ENCODE measurements at regions of chr14 and their contacts with region 1.

Region 1: DNA sequence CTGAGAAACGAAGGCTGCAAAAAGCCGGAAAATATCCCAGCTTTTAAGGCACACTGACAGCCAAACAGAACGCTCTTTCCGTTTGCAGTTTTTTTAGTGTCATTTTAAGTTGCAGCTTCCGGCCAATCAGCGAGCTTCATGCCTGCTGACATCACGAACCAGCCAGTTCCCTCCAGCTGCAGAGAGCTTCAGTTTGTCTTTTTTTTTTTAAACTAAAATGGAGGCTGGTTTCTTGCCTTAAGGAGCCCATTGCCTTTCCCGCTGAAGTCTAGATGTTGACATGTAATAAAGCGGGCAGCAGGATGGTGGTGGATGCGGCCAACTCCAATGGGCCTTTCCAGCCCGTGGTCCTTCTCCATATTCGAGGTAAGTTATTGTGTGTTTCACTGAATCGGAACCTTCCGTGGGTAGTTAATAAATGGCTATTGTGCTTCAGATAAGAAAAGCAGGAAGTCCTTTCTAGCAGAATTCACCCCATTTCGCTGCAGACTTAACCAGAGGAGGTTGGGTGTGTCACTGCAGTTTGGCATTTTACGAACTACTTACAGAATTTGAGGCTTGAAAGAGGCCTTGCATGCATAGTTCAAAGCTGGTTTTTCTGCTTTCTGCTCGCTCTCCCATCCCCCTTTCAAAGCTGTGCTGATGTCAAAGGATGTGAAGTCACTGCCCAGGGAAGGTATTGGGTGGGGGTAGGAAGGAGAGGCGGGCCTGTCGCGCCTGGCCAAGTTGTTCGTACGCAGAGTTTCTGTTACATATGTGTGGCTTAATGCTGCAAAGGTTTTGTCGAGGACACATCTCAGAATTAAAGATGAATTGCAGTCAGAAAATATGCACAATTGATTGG is 48.4 kb downstream of the PPP2R5C start:
- DNase-seq: peak; percentile 70 to 89 (median 75)
- ATAC-seq: peak; percentile 85
- H3K4me3 ChIP-seq: peak overlapping the region; percentile 52
- H3K27ac ChIP-seq: peak overlapping the region; percentile 99
- H3K4me1 ChIP-seq: peaks cover 13 to 44% of the 10 kb centered on the region in 2 experiments; a peak in 4 of 5 replicates
- H3K27me3 ChIP-seq: no peaks in the 10 kb centered on the region
- CTCF ChIP-seq: no peak
- EP300 ChIP-seq: no peak
- POLR2A ChIP-seq: peak; percentile 75
- RAD21 ChIP-seq: no peak

Region 2: DNA sequence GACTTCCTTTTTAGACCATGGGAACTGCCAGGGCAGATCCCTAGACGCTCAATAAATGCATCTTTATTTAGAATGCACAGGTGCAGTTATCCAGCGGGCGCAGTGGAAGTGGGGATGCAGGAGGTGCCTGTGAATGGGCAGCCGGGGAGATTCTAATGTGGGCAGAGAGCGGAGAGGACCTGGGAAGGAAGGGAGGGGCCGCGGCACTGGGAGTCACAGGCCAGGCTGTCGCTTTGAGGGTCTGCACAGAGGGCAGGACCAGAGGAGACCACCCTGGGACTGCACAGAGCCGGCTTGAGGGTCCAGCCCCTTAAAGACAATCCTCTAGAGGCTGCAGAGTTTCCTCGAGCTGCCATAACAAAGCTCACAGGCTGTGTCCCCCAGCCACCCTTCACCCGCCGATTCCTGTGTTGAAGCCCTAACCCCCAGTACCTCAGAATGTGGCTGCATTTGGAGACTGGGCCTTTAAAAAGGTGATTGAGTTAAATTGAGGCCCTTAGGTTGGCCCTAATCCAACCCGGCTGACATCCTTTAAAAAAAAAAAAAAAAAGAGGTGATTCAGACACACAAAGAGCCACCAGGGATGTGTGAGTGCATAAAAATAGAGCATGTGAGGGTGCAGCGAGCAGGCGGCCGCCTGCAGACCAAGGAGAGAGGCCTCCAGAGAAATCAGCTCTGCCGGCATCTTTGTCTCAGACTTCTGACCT is 92.8 kb before region 1 on chr14:
- CTCF ChIA-PET with region 1: no interaction called
- POLR2A ChIA-PET with region 1: no interaction called
- in situ Hi-C with region 1: no loop called
- intact Hi-C with region 1: loop called (anchors 2 kb)
- DNase-seq: peak in 2 of 4 experiments; percentile 1 to 43
- ATAC-seq: no peak
- H3K4me3 ChIP-seq: no peak overlapping the region
- H3K27ac ChIP-seq: peak overlapping the region; percentile 100; the same call in 2 of the 3 replicates
- H3K4me1 ChIP-seq: peaks cover 30 to 38% of the 10 kb centered on the region in 2 experiments; a peak in 4 of 5 replicates
- H3K27me3 ChIP-seq: no peaks in the 10 kb centered on the region
- CTCF ChIP-seq: no peak
- EP300 ChIP-seq: no peak
- POLR2A ChIP-seq: no peak
- RAD21 ChIP-seq: no peak

Region 3: DNA sequence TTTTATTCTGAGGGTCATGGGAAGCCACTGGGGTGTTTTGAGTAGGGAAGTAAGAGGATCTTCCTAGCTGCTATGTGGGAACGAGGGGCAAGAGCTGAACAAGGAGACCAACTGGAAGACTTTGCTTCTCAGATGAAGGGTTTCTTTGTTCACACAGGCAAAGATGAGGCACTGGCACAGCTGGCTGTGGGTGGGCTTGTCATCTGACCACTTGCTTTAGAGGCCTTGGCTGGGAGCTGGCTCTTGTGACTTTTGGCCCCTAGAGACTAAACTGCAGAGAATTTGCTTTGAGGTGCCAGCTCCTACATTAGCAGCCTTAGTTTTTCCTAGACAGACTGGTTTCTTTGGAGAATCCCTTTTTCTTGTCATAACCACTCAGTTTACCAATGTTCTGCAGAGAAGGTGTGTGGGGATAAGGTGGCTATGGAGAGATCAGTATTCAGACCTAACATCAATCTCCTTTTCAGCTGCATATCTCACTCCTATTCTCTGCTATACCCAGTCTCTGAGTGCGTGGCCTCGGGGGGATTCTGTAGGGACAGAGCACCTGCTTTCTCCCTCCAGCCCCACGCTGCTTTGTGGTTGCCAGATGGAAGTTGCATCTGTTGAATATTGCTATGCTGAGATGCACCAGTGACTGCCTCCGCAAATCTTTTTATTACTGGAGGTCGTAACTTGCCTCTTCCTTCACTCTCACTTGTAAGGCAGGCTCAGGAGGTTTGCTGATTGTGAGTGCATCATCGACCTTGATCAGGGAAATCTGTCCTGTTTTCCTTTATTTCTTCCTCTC is 35.7 kb before region 1 on chr14:
- CTCF ChIA-PET with region 1: no interaction called
- POLR2A ChIA-PET with region 1: no interaction called
- in situ Hi-C with region 1: no loop called
- intact Hi-C with region 1: loop called (anchors 5 kb)
- DNase-seq: no peak
- ATAC-seq: no peak
- H3K4me3 ChIP-seq: no peak overlapping the region
- H3K27ac ChIP-seq: no peak overlapping the region
- H3K4me1 ChIP-seq: peaks cover 1 to 5% of the 10 kb centered on the region in 2 experiments; a peak in 3 of 5 replicates
- H3K27me3 ChIP-seq: no peaks in the 10 kb centered on the region
- CTCF ChIP-seq: no peak
- EP300 ChIP-seq: no peak
- POLR2A ChIP-seq: no peak
- RAD21 ChIP-seq: no peak

Region 4: DNA sequence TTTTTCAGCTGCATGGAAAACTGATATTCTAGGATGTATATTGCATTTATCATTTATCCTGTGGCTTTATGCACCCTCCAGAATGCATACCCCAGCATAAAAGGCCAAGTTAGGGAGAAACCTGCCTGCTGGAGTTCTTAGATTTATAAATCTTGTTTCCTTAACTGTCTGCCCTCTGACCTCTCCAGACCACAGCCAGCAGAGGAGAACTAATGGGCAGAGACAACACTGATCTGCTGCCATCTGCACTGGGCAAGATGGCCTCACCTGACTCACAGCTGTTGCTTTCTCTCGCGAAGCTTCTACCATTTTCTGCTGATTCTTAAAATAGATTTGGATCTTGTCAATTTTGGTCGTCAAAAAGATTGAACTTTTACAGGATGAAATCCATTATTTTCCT is 17.4 kb after region 1 on chr14:
- CTCF ChIA-PET with region 1: no interaction called
- POLR2A ChIA-PET with region 1: interaction called, 11 read pairs
- in situ Hi-C with region 1: no loop called
- intact Hi-C with region 1: no loop called
- DNase-seq: no peak
- ATAC-seq: no peak
- H3K4me3 ChIP-seq: no peak overlapping the region
- H3K27ac ChIP-seq: no peak overlapping the region
- H3K4me1 ChIP-seq: peaks cover 0 to 16% of the 10 kb centered on the region in 2 experiments; a peak in 3 of 5 replicates
- H3K27me3 ChIP-seq: no peaks in the 10 kb centered on the region
- CTCF ChIP-seq: no peak
- EP300 ChIP-seq: no peak
- POLR2A ChIP-seq: no peak
- RAD21 ChIP-seq: no peak

Region 5: DNA sequence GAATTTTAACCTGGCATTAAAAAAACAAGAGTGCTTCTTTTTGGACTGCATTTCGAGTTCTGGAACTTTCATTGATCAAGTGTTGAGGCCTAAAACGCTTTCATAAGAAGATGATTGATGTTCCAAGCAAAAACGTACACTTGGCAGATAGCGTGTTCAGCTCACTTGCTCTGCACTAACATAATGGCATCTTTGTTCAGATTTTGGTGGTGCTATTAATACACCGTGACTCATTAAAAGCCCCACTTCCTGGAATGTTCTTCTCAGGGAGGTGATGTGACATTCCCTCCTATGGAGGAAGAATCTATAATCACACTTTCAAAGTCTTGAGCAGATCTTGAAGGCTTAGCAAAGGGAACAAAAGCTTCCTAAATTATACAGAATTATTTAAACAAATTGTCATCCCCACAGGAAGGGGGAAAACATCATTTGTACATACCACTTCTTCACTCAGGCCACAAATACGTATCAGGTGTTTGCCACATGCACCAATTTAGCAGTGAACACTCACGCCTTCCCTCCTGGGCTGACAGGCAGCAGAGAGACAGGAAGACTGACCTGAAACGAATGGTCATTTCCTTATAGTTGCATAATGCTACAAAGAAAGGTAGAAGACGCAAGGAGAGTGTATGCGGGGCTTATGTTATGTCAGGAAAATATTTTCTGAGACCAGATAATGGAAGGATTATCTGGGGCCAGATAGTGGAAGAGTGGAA is 261.5 kb after region 1 on chr14:
- CTCF ChIA-PET with region 1: no interaction called
- POLR2A ChIA-PET with region 1: no interaction called
- in situ Hi-C with region 1: no loop called
- intact Hi-C with region 1: no loop called
- DNase-seq: no peak
- ATAC-seq: peak; percentile 66
- H3K4me3 ChIP-seq: no peak overlapping the region
- H3K27ac ChIP-seq: peak overlapping the region; percentile 48; the same call in 2 of the 3 replicates
- H3K4me1 ChIP-seq: peaks cover 0 to 6% of the 10 kb centered on the region in 2 experiments; a peak in 2 of 5 replicates
- H3K27me3 ChIP-seq: no peaks in the 10 kb centered on the region
- CTCF ChIP-seq: no peak
- EP300 ChIP-seq: no peak
- POLR2A ChIP-seq: no peak
- RAD21 ChIP-seq: no peak

Measured in K562 (cell line).